OCI-LY7 (cell line): ENCODE measurements at regions of chr1 and their contacts with region 1.

Region 1: GRCh38 chr1:116817582-116818064 is 63.4 kb downstream of the CD2 start:
- DNase-seq: peak; percentile 81
- H3K4me3 ChIP-seq: no peak overlapping the region
- H3K27ac ChIP-seq: no peak overlapping the region
- H3K4me1 ChIP-seq: peaks cover 14% of the 10 kb centered on the region
- CTCF ChIP-seq: peak; percentile 99

Region 2: GRCh38 chr1:116724765-116725375 is 92.8 kb before region 1 on chr1:
- CTCF ChIA-PET with region 1: no interaction called
- POLR2A ChIA-PET with region 1: no interaction called
- intact Hi-C with region 1: loop called (anchors 1 kb)
- DNase-seq: peak; percentile 81
- H3K4me3 ChIP-seq: no peak overlapping the region
- H3K27ac ChIP-seq: no peak overlapping the region
- H3K4me1 ChIP-seq: peaks cover 9% of the 10 kb centered on the region
- CTCF ChIP-seq: peak; percentile 98

Region 3: DNA sequence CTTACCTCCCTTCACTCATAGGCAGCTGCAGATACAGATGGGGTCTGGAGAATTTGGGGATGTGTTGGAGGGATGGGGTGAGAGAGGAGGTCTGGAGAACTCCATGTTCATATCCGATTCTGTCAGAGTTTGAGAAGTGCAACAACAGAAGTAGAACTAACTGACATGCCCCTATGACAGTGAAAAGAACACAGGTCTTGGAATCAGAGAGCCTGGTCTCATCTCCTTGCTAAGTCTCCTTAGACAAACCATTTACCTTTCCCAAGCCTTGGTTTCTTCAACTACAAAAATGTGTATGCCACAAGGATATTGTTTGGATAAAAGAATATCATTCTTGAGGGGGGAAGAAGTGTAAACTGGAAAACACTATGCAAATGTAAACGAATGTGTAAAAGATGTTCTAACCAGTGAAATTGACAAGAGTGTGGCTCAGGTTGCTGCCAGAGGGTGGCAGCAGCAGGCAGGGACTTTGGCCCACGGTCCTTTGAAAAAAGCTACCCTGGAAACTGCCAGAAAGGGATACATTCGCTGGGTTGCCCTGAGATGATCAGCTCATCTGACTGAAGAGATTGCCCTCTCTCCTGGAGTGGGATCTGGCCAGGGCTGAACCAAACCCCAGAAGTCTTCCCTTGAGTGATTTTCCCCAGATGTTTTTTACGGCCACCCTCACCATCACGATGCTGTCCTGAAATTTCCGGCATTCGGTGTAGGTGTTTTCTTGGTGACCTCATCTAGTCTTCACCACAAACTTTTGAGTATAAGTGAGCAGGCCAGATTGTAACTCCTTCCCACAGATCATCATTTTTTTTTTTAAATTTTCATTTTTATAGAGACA is 80.4 kb before region 1 on chr1:
- CTCF ChIA-PET with region 1: interaction called, 8 read pairs
- POLR2A ChIA-PET with region 1: no interaction called
- intact Hi-C with region 1: loop called (anchors 1 kb)
- DNase-seq: peak; percentile 75
- H3K4me3 ChIP-seq: no peak overlapping the region
- H3K27ac ChIP-seq: no peak overlapping the region
- H3K4me1 ChIP-seq: peaks cover 31% of the 10 kb centered on the region
- CTCF ChIP-seq: peak; percentile 95

Region 4: DNA sequence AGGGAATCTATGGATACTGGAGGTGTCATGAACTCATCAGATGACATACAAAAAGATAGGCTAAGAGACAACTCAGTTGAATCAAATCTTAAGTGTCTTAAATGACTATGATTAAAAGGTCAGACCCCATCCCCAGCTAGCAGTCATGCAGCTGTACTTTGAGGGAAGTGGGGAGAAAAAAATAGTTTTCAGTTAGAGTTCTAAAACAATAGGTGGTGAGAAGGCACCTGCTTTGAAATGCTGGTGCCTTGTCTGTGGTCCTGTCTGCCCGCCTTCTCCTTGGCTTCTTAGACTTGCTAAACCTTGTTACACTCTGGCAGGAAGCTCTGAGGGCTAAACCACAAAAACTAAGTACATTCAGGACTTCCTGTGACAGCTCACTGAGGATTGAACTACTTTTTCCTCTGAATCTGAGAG is 48.1 kb before region 1 on chr1:
- CTCF ChIA-PET with region 1: no interaction called
- POLR2A ChIA-PET with region 1: interaction called, 7 read pairs
- intact Hi-C with region 1: loop called (anchors 5 kb)
- DNase-seq: peak; percentile 92
- H3K4me3 ChIP-seq: peak overlapping the region; percentile 32
- H3K27ac ChIP-seq: peak overlapping the region; percentile 95
- H3K4me1 ChIP-seq: peaks cover 49% of the 10 kb centered on the region
- CTCF ChIP-seq: no peak

Region 5: GRCh38 chr1:117059678-117060440 is 242.2 kb after region 1 on chr1 and contains the start of gene TTF2:
- CTCF ChIA-PET with region 1: no interaction called
- POLR2A ChIA-PET with region 1: no interaction called
- intact Hi-C with region 1: loop called (anchors 5 kb)
- DNase-seq: peak; percentile 99
- H3K4me3 ChIP-seq: peak within 1 kb of the TSS; percentile 90
- H3K27ac ChIP-seq: peak within 1 kb of the TSS; percentile 97
- H3K4me1 ChIP-seq: peaks cover 44% of the 10 kb centered on the region
- CTCF ChIP-seq: 0 out of 2 replicates have a peak, but pooled peaks have one; percentile 21
- total RNA-seq, gene TTF2: 81.3 and 82.6 TPM in 2 replicates